K562 (cell line): ENCODE measurements at regions of chr9 and their contacts with region 1.

Region 1: DNA sequence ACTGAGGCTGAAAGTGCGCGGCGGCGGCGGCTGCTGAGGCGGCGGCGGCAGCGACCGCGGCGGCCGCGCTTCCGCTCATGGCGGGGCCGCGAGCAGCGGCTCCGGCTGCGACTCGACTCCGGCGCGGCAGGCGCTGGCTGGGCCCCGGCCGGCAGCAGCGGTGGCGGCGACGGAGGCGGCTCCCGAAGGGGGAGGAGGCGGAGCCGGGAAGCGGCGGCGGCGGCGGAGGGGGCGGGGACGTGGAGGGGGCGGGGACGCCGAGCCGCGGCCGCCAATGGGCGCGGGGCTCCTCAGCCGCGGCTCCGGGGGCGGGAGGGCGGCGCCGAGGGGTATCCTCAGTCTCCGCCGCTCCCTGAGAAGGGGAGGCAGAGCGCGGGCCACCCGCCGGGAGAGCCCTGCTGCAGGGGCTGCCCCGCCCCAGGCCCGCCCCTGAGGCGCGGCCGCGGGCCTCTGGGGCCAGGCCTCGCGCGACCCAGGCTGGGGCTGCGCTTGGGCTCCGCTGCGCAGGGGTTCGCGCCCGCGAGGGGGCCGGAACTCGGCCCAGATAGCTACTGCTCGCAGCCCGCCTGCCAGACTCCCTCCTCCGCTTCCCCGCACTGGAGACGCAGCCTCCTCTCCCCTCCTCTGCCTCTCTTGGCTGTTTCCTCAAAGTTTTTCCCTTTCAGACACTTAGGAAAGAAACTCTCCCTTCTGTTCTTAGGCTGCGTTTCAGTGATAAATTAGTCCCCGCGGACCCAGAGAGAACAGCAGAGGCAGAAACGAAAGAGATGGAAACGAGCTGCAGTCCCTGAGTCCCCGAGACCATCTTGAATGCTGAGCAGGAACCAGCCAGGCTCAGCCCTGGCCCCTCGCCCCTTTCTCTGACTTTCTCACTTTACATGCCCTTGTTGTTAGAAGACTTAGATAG is 85.0 kb upstream of the MELK start:
- DNase-seq: peak; percentile 87 to 89 (median 88)
- ATAC-seq: peak; percentile 98
- H3K4me3 ChIP-seq: peak overlapping the region; percentile 66
- H3K27ac ChIP-seq: peak overlapping the region; percentile 89
- H3K4me1 ChIP-seq: peaks cover 13 to 21% of the 10 kb centered on the region in 2 experiments; a peak in 4 of 5 replicates
- H3K27me3 ChIP-seq: no peaks in the 10 kb centered on the region
- CTCF ChIP-seq: 0 out of 6 replicates have a peak, but pooled peaks of 1 of the 3 experiments have one; percentile 7
- EP300 ChIP-seq: no peak
- POLR2A ChIP-seq: peak; percentile 86
- RAD21 ChIP-seq: no peak

Region 2: DNA sequence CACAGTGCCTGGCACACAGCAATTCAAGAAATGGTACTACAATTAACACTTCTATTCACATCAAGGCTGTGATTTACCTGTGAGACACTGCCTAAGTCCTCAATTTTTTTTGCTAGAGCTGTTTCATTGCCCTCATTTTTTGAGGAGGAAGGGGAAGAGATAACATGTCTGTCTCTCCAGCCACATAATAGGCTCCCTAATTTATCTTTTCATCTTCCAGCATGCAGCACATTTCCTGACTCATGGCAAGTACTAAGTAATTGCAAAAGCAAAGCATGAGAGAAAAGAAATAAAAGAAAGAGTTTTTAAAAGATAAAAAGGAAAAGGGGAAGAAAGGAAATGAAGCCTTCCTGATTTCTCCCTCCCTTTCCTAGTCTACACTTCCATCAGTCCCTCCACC is 60.8 kb before region 1 on chr9:
- CTCF ChIA-PET with region 1: no interaction called
- POLR2A ChIA-PET with region 1: no interaction called
- in situ Hi-C with region 1: no loop called
- intact Hi-C with region 1: loop called (anchors 2 kb)
- DNase-seq: peak in 2 of 4 experiments; percentile 18 to 20
- ATAC-seq: no peak
- H3K4me3 ChIP-seq: no peak overlapping the region
- H3K27ac ChIP-seq: no peak overlapping the region
- H3K4me1 ChIP-seq: peaks cover 0 to 7% of the 10 kb centered on the region in 2 experiments; a peak in 3 of 5 replicates
- H3K27me3 ChIP-seq: no peaks in the 10 kb centered on the region
- CTCF ChIP-seq: no peak
- EP300 ChIP-seq: no peak
- POLR2A ChIP-seq: no peak
- RAD21 ChIP-seq: no peak

Region 3: DNA sequence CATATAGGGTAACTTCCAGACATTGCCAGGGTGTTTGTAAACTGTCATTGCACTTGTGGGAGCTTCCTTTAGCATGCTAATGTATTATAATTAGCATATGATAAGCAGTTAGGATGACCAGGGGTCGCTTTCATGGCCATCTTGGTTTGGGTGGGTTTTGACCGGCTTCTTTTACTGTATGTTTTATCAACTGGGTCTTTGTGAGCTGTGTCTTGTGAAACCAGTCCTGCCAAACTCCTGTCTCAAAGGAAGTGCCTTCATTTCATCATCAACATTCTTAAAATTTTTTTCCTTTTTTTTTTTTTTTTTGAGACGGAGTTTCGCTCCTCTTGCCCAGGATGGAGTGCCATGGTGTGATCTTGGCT is 73.1 kb after region 1 on chr9:
- CTCF ChIA-PET with region 1: no interaction called
- POLR2A ChIA-PET with region 1: no interaction called
- in situ Hi-C with region 1: no loop called
- intact Hi-C with region 1: loop called (anchors 5 kb)
- DNase-seq: no peak
- ATAC-seq: no peak
- H3K4me3 ChIP-seq: no peak overlapping the region
- H3K27ac ChIP-seq: no peak overlapping the region
- H3K4me1 ChIP-seq: peaks cover 0 to 6% of the 10 kb centered on the region in 2 experiments; a peak in 3 of 5 replicates
- H3K27me3 ChIP-seq: no peaks in the 10 kb centered on the region
- CTCF ChIP-seq: no peak
- EP300 ChIP-seq: no peak
- POLR2A ChIP-seq: no peak
- RAD21 ChIP-seq: no peak